ENCODE measurements at regions of chr5 and their contacts with region 1.

Region 1: DNA sequence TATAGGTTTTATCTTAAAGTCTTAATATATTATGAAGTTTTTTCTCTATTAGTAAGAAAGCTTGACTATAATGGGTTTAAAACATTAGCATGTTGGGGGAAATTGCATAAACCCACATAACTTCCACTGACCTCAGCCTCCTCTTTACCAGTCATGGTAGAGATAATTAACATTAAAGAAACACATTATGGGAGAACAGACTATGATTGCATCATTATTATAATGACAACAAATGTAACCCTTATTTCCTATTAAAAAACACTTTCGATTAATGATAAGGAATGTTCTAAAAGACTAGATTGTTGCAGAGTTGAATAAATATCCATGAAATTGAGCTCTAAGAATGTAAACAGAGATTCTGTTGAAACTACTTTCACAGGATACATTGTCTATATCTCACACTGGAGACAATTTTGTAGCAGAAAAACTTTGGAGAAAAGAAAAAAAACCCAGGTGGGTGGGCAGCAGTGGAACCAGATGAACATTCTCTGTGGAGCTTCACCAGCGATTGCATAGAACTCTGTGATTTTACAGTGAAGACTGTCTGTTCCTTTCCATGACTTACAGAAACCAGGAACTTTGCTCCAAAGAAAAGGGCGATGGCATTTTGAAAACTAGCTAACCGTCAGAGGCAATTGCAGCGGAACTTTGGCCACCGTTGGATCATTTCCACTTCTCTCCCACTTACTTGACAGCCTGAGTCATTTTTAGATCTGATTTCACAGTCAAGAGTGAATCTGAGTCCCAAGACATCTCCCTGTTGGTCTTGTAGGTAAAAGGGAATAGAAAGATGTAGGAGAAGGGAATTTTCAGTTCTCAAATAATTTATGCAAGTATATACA is 21.0 kb upstream of the ERAP2 start:
- DNase-seq: no peak
- H3K4me3 Mint-ChIP-seq: no peak overlapping the region
- H3K27ac Mint-ChIP-seq: no peak overlapping the region
- H3K4me1 Mint-ChIP-seq: no peaks in the 10 kb centered on the region
- H3K27me3 Mint-ChIP-seq: no peaks in the 10 kb centered on the region
- CTCF ChIP-seq: no peak

Region 2: GRCh38 chr5:96868603-96869371 is 13.5 kb after region 1 on chr5:
- CTCF ChIA-PET with region 1: interaction called, 10 read pairs
- intact Hi-C with region 1: no loop called
- DNase-seq: peak; percentile 40
- H3K4me3 Mint-ChIP-seq: no peak overlapping the region
- H3K27ac Mint-ChIP-seq: no peak overlapping the region
- H3K4me1 Mint-ChIP-seq: peaks cover 6% of the 10 kb centered on the region
- H3K27me3 Mint-ChIP-seq: no peaks in the 10 kb centered on the region
- CTCF ChIP-seq: peak; percentile 85

Region 3: DNA sequence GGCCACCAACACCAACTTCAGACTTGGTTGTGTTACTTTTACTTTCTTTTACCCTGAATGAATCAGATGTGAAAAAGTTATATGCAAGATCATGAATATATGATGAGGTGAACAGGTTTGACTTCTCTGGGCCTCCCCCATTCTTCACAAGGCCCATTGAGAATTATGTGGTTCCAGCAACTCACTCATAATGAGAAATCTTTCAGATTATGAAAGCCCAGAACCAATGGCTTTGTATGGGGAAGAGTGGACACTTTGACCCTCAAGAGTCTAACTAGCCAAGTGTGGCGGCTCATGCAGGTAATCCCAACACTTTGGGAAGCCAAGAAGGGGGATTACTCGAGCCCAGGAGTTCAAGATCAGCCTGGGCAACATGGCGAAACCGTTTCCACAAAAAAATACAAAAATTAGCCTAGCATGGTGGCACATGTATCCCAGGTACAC is 64.5 kb after region 1 on chr5:
- CTCF ChIA-PET with region 1: no interaction called
- intact Hi-C with region 1: no loop called
- DNase-seq: no peak
- H3K4me3 Mint-ChIP-seq: no peak overlapping the region
- H3K27ac Mint-ChIP-seq: no peak overlapping the region
- H3K4me1 Mint-ChIP-seq: no peaks in the 10 kb centered on the region
- H3K27me3 Mint-ChIP-seq: no peaks in the 10 kb centered on the region
- CTCF ChIP-seq: no peak